ENCODE measurements at regions of chr12 and their contacts with region 1.

Region 1: DNA sequence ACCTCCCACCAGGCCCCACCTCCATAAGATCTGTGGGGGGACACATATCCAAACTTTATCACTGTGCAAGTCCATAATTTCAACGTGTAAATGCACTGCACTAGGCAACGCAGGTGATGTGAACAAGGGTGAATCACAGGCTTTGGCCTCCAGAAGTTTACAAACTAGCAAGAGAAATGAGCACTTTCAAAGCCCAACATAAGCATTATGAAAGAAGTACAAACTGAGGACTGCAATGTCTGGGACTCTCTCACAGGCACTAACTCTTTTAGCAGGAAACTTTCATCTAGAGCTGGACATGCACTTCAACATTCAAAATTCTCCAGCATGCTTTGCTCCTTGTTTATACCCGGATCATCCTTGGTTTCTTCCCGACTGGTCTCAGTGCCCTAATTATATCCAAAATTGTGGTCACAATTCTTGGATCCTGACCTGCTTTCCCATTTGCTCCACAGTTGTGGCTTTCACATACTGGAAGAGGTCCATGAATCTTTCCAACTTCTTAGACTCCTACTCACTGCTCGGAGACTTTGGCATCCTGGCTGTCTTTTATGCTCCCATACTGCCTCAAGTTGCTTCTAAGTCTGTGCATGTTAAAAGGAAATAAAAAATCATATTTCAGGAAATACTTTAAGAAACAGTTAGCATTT is 44.9 kb upstream of the STRAP start:
- DNase-seq: no peak
- H3K4me3 ChIP-seq: peak overlapping the region in 1 of 2 donors; percentile 32
- H3K27ac ChIP-seq: peak overlapping the region; percentile 5 to 53
- H3K4me1 ChIP-seq: peaks cover 0 to 3% of the 10 kb centered on the region in 2 donors
- H3K27me3 ChIP-seq: no peaks in the 10 kb centered on the region
- CTCF ChIP-seq: no peak

Region 2: DNA sequence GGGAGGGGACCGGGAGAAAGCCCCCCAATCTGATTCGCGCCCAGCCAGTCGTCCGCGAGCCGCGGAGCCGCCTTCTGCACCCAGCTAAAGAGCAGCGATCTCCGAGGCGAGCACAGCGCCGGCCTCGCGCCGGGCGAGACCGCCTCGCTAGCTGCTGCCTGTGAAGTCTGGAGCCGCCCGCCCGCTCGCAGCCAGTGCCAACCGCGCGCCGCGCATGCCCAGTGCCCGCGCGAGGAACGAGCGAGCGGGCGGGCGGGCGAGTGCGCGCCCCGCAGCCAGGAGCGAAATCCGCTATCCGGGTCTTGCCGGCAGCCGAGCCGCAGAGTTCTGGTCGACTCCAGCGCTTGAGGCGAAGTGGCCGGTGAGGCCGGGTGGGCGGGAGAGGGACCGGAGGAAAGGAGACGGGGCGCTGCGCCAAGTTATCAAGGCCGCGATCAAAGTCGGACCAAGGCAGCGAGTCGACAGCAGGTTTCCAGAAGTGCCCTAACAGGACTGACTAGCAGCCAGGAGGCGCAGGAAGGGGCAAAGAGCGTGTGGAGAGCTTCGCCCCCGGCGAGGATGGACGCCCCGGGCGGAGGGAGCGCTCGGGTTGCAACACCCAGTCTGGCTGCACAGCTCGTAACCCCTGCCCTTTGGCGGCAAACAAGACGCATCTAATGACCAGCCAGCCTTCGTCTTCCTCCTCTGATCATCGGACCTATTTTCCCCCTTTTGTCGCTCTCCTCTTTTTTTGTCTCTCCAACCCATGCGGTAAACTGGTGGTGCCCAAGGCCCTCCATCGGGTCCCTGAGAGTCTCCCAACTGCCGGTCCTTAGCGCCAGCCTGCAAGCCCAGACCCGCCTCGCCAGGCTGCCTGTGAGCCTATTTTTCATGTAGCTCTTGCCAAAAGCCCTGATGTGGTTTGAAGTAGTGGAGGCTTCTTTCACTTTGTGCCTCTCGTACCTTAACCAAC is 47.8 kb before region 1 on chr12 and contains the start of gene EPS8:
- intact Hi-C with region 1: loop called (anchors 5 kb)
- DNase-seq: peak; percentile 54 to 96
- H3K4me3 ChIP-seq: peak within 1 kb of the TSS; percentile 74 to 90
- H3K27ac ChIP-seq: peak within 1 kb of the TSS; percentile 88 to 92
- H3K4me1 ChIP-seq: no peaks in the 10 kb centered on the region
- H3K27me3 ChIP-seq: no peaks in the 10 kb centered on the region
- CTCF ChIP-seq: no peak
- total RNA-seq, gene EPS8: 94.6 TPM

Measured in ascending aorta (tissue), 2 donors.